ENCODE measurements at regions of chr10 and their contacts with region 1.

Region 1: GRCh38 chr10:14995964-14996565 is 36.9 kb downstream of the MEIG1 start:
- DNase-seq: no peak
- ATAC-seq: no peak
- H3K4me3 ChIP-seq: no peak overlapping the region
- H3K4me3 Mint-ChIP-seq: no peak overlapping the region
- H3K27ac ChIP-seq: no peak overlapping the region
- H3K27ac Mint-ChIP-seq: no peak overlapping the region
- H3K4me1 ChIP-seq: no peaks in the 10 kb centered on the region
- H3K4me1 Mint-ChIP-seq: no peaks in the 10 kb centered on the region
- H3K27me3 ChIP-seq: no peaks in the 10 kb centered on the region
- H3K27me3 Mint-ChIP-seq: peaks cover 7 to 17% of the 10 kb centered on the region in 2 donors
- CTCF ChIP-seq: no peak

Region 2: DNA sequence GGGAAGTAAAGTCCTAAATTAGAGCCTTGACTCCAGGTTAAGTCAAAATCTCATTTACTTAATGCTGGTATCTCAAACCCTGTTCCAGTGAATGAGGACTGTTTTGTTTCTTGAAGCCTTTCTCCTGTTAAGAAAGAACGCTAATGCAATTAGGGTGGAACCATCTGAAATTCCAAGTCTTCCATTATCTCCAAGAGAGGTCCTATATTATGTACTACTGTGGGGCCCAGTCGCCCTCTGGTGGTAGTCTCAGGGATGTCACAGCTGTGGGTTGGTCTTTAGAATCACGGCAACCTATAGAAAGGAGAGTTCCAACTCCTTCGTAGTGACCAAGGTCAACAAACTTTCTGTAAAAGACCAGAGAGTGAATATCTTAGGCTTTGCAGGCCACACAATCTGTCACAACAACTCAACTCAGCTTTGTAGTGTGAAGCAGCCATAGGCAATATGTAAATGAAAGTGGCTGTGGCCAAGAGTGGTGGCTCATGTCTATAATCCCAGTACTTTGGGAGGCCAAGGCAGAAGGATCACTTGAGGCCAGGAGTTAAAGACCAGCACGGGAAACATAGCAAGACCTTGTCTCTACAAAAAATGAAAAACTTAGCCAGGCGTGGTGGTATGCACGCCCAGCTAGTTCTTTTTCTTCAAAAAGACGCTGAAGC is 110.4 kb after region 1 on chr10:
- intact Hi-C with region 1: loop called (anchors 2 kb)
- DNase-seq: peak; percentile 61 to 84
- ATAC-seq: peak; percentile 91 to 99 (median 98)
- H3K4me3 ChIP-seq: no peak overlapping the region
- H3K4me3 Mint-ChIP-seq: no peak overlapping the region
- H3K27ac ChIP-seq: no peak overlapping the region
- H3K27ac Mint-ChIP-seq: peak overlapping the region; percentile 18 to 27
- H3K4me1 ChIP-seq: peaks cover 4% of the 10 kb centered on the region
- H3K4me1 Mint-ChIP-seq: peaks cover 6 to 14% of the 10 kb centered on the region in 2 donors
- H3K27me3 ChIP-seq: no peaks in the 10 kb centered on the region
- H3K27me3 Mint-ChIP-seq: no peaks in the 10 kb centered on the region
- CTCF ChIP-seq: peak; percentile 91